ENCODE measurements at regions of chr13 and their contacts with region 1.

Region 1: DNA sequence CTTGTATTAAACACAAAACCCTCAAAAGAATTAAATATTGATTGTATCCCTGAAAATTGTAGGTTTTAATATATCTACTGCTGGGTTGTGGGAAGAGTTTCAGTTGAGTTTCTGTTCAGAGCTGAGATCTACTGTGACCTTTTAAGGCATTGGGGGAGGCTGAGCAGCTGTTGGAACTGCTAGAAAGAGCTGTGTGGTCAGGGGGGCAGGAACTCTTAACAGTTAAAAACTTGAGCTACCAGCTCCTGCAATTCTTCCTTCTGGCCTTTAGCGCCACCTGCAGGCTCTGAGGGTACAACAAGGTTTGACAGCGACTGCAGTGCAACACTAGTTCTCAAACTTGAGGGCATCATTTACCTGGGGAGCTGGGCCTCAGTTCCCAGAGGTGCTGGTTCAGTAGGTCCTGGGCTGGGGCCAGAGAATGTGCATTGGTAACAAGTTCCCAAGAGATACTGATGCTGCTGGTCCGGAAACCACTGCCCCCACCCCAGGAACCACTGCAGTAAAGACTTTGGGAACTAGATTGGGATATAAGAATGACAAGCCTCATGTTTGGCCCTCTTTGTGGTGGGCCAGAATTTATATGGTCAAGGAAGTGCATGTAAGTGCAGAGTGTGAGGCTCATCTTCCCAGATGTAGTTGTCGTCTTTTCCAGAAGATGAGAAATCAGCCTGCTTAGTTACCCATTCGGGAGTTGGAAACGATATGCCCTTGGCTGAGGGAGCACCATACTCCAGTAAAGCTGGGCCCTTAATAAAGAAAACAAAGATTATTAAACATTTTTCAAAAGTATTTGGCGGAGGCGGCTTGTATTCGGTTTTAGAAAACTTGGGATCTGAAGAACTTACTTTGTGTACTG is 2.6 kb downstream of the RNASEH2B start:
- DNase-seq: peak; percentile 95
- H3K4me3 Mint-ChIP-seq: peak overlapping the region; percentile 94
- H3K27ac Mint-ChIP-seq: peak overlapping the region; percentile 98
- H3K4me1 Mint-ChIP-seq: peaks cover 51% of the 10 kb centered on the region
- H3K27me3 Mint-ChIP-seq: no peaks in the 10 kb centered on the region

Region 2: GRCh38 chr13:49976314-49977258 is 935.6 kb before region 1 on chr13:
- CTCF ChIA-PET with region 1: interaction called, 36 read pairs
- POLR2A ChIA-PET with region 1: no interaction called
- intact Hi-C with region 1: loop called (anchors 1 kb)
- DNase-seq: peak; percentile 81
- H3K4me3 Mint-ChIP-seq: no peak overlapping the region
- H3K27ac Mint-ChIP-seq: no peak overlapping the region
- H3K4me1 Mint-ChIP-seq: peaks cover 2% of the 10 kb centered on the region
- H3K27me3 Mint-ChIP-seq: no peaks in the 10 kb centered on the region

Region 3: DNA sequence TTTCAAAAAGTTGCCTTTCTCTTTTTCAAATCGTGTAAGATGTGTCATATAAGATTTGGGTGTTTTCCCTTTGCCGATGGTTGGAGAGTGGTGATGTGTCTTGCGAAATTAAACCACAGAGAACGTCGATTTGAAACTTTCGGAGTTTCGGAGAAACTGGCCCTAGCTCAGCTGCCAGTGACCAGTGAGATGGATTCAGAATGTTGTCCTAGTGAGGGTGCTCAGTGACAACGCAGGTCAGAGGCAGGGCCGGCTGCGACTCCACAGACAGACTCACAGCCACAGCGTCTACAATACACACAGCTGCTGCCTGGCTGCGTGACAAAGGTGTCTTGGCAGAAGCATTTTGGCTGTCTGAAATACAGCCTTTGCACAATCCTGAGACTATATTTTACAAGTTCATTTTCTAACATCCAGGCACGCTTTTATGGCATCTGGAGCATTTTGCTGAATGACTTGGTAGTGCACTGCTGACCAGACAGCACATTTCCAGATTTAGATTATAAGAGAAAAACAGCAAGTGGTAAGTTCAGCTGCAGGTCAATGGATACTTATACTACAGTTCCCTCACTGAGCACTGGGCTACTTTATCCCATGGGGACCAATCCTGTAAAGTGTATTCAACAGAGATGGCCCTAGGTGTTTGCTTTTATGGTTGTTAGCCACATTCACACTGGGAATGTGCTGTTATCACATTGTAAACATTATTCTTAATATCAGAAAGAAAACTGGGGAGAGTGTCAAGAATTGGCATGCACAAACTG is 689.4 kb before region 1 on chr13:
- CTCF ChIA-PET with region 1: no interaction called
- POLR2A ChIA-PET with region 1: no interaction called
- intact Hi-C with region 1: loop called (anchors 10 kb)
- DNase-seq: peak; percentile 45
- H3K4me3 Mint-ChIP-seq: peak overlapping the region; percentile 57
- H3K27ac Mint-ChIP-seq: no peak overlapping the region
- H3K4me1 Mint-ChIP-seq: peaks cover 61% of the 10 kb centered on the region
- H3K27me3 Mint-ChIP-seq: peaks cover 47% of the 10 kb centered on the region

Region 4: GRCh38 chr13:50419896-50420295 is 492.3 kb before region 1 on chr13:
- CTCF ChIA-PET with region 1: interaction called, 3 read pairs
- POLR2A ChIA-PET with region 1: no interaction called
- intact Hi-C with region 1: loop called (anchors 5 kb)
- DNase-seq: no peak
- H3K4me3 Mint-ChIP-seq: no peak overlapping the region
- H3K27ac Mint-ChIP-seq: no peak overlapping the region
- H3K4me1 Mint-ChIP-seq: peaks cover 14% of the 10 kb centered on the region
- H3K27me3 Mint-ChIP-seq: no peaks in the 10 kb centered on the region

Region 5: GRCh38 chr13:50801087-50801931 is 110.9 kb before region 1 on chr13:
- CTCF ChIA-PET with region 1: interaction called, 28 read pairs
- POLR2A ChIA-PET with region 1: no interaction called
- intact Hi-C with region 1: loop called (anchors 1 kb)
- DNase-seq: peak; percentile 70
- H3K4me3 Mint-ChIP-seq: no peak overlapping the region
- H3K27ac Mint-ChIP-seq: no peak overlapping the region
- H3K4me1 Mint-ChIP-seq: peaks cover 4% of the 10 kb centered on the region
- H3K27me3 Mint-ChIP-seq: peaks cover 1% of the 10 kb centered on the region

Region 6: GRCh38 chr13:51070005-51070649 is 158.0 kb after region 1 on chr13:
- CTCF ChIA-PET with region 1: interaction called, 13 read pairs
- POLR2A ChIA-PET with region 1: no interaction called
- intact Hi-C with region 1: loop called (anchors 5 kb)
- DNase-seq: peak; percentile 86
- H3K4me3 Mint-ChIP-seq: no peak overlapping the region
- H3K27ac Mint-ChIP-seq: no peak overlapping the region
- H3K4me1 Mint-ChIP-seq: peaks cover 5% of the 10 kb centered on the region
- H3K27me3 Mint-ChIP-seq: peaks cover 18% of the 10 kb centered on the region

Region 7: GRCh38 chr13:51230477-51231105 is 318.4 kb after region 1 on chr13:
- CTCF ChIA-PET with region 1: no interaction called
- POLR2A ChIA-PET with region 1: no interaction called
- intact Hi-C with region 1: no loop called
- DNase-seq: no peak
- H3K4me3 Mint-ChIP-seq: no peak overlapping the region
- H3K27ac Mint-ChIP-seq: no peak overlapping the region
- H3K4me1 Mint-ChIP-seq: no peaks in the 10 kb centered on the region
- H3K27me3 Mint-ChIP-seq: peaks cover 34% of the 10 kb centered on the region

Measured in activated CD4-positive, alpha-beta memory T cell treated with anti-CD3 and anti-CD28 coated beads for 36 hours (primary cell).